ENCODE measurements at regions of chr12 and their contacts with region 1.

Region 1: DNA sequence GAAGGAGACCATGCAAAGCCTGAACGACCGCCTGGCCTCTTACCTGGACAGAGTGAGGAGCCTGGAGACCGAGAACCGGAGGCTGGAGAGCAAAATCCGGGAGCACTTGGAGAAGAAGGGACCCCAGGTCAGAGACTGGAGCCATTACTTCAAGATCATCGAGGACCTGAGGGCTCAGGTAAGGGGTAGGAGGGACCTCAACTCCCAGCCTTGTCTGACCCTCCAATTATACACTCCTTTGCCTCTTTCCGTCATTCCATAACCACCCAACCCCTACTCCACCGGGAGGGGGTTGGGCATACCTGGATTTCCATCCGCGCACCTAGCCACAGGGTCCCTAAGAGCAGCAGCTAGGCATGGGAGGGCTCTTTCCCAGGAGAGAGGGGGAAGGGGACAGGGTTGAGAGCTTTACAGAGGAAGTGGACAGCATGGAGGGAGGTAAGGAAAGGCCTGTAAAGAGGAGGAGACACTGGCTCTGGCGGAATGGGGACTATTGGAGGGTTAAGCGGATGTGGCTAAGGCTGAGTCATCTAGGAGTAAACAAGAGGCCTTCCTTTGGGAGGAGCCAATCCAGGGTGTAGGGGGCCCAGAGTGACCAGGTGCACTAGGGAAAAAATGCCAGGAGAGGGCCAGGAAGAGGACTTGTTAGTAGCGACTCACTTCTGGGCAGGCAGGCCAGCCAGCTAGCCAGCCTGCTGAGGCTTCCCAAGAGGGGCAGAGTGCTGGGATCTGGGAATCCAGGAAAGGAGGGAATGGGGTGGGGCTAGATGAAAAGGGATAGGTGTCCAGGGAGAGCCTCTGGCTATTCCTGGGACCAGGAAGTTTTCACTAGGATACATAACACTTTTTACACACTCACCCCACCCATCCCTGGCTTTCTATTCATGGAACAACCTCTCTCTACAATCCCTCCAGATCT is 754 bp downstream of the KRT18 start:
- DNase-seq: peak; percentile 98
- ATAC-seq: peak; percentile 83
- H3K4me3 ChIP-seq: peak overlapping the region; percentile 88 to 100 (median 99)
- H3K27ac ChIP-seq: peak overlapping the region; percentile 100
- H3K4me1 ChIP-seq: peaks cover 68% of the 10 kb centered on the region
- H3K27me3 ChIP-seq: peaks cover 0 to 2% of the 10 kb centered on the region in 2 experiments; a peak in 1 of 5 replicates
- CTCF ChIP-seq: peak; percentile 42; the same call in 1 of the 2 replicates
- EP300 ChIP-seq: peak in 1 of 2 experiments; percentile 90; a peak in 2 of 4 replicates
- POLR2A ChIP-seq: peak; percentile 82 to 96
- RAD21 ChIP-seq: peak; percentile 81

Region 2: GRCh38 chr12:52969828-52970569 is 20.3 kb after region 1 on chr12:
- CTCF ChIA-PET with region 1: no interaction called
- POLR2A ChIA-PET with region 1: interaction called, 8 read pairs
- in situ Hi-C with region 1: no loop called
- intact Hi-C with region 1: loop called (anchors 2 kb)
- DNase-seq: peak; percentile 82
- ATAC-seq: peak; percentile 57
- H3K4me3 ChIP-seq: peak overlapping the region in 1 of 3 experiments; percentile 44; a peak in 2 of 6 replicates
- H3K27ac ChIP-seq: no peak overlapping the region
- H3K4me1 ChIP-seq: peaks cover 62% of the 10 kb centered on the region
- H3K27me3 ChIP-seq: no peaks in the 10 kb centered on the region
- CTCF ChIP-seq: no peak
- EP300 ChIP-seq: peak in 1 of 2 experiments; percentile 68; a peak in 2 of 4 replicates
- POLR2A ChIP-seq: no peak
- RAD21 ChIP-seq: no peak

Region 3: GRCh38 chr12:53508534-53509199 is 559.0 kb after region 1 on chr12:
- CTCF ChIA-PET with region 1: no interaction called
- POLR2A ChIA-PET with region 1: no interaction called
- in situ Hi-C with region 1: no loop called
- intact Hi-C with region 1: no loop called
- DNase-seq: peak; percentile 72
- ATAC-seq: peak; percentile 93
- H3K4me3 ChIP-seq: no peak overlapping the region
- H3K27ac ChIP-seq: no peak overlapping the region
- H3K4me1 ChIP-seq: no peaks in the 10 kb centered on the region
- H3K27me3 ChIP-seq: no peaks in the 10 kb centered on the region
- CTCF ChIP-seq: peak; percentile 96
- EP300 ChIP-seq: no peak
- POLR2A ChIP-seq: no peak
- RAD21 ChIP-seq: peak; percentile 86